SK-N-SH (cell line): ENCODE measurements at regions of chr13 and their contacts with region 1.

Region 1: GRCh38 chr13:35789335-35790165 is 313.1 kb upstream of the MAB21L1 start:
- DNase-seq: no peak
- H3K4me3 ChIP-seq: peak overlapping the region in 1 of 2 experiments; percentile 3; a peak in 1 of 4 replicates
- H3K27ac ChIP-seq: peak overlapping the region; percentile 56 to 97; a peak in 3 of 4 replicates
- H3K4me1 ChIP-seq: peaks cover 0 to 47% of the 10 kb centered on the region in 2 experiments; a peak in 3 of 4 replicates
- H3K27me3 ChIP-seq: no peaks in the 10 kb centered on the region
- CTCF ChIP-seq: peak; percentile 76
- EP300 ChIP-seq: peak; percentile 10 to 65; a peak in 3 of 4 replicates
- RAD21 ChIP-seq: peak; percentile 87

Region 2: DNA sequence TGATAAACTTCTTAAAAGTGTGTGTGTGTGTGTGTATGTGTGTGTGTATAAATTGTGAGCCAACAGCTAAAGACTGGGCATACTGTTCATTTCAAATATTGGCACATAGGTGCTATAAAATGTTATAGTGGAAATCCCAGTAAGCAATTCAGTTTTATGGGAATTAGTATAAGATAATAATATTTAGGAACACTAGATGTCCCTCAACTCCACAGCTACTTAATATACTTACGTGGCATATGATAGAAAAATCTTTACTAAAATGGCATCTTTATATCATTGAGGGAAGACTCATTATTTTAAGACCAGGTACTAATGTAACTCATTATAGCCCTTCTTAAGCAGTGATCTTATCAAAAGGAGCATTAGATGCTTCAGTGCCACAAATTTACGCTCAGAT is 579.3 kb before region 1 on chr13:
- CTCF ChIA-PET with region 1: interaction called, 18 read pairs
- POLR2A ChIA-PET with region 1: no interaction called
- DNase-seq: peak; percentile 3
- H3K4me3 ChIP-seq: no peak overlapping the region
- H3K27ac ChIP-seq: peak overlapping the region in 1 of 2 experiments; percentile 28; a peak in 1 of 4 replicates
- H3K4me1 ChIP-seq: no peaks in the 10 kb centered on the region; a peak in 1 of 4 replicates
- H3K27me3 ChIP-seq: no peaks in the 10 kb centered on the region
- CTCF ChIP-seq: peak; percentile 43
- EP300 ChIP-seq: no peak
- RAD21 ChIP-seq: peak; percentile 77

Region 3: GRCh38 chr13:35475960-35476943 is 313.3 kb before region 1 on chr13 and contains the start of gene MAB21L1:
- CTCF ChIA-PET with region 1: interaction called, 30 read pairs
- POLR2A ChIA-PET with region 1: interaction called, 32 read pairs
- DNase-seq: peak; percentile 90
- H3K4me3 ChIP-seq: peak within 1 kb of the TSS; percentile 64 to 82
- H3K27ac ChIP-seq: peak within 1 kb of the TSS; percentile 93 to 99
- H3K4me1 ChIP-seq: peaks cover 2 to 6% of the 10 kb centered on the region in 2 experiments; a peak in 3 of 4 replicates
- H3K27me3 ChIP-seq: no peaks in the 10 kb centered on the region
- CTCF ChIP-seq: no peak
- EP300 ChIP-seq: peak in 1 of 2 experiments; percentile 23; a peak in 1 of 4 replicates
- RAD21 ChIP-seq: peak; percentile 22; the same call in 1 of the 2 replicates
- polyA plus RNA-seq, gene MAB21L1: 42.3 and 44.8 TPM in 2 replicates

Region 4: GRCh38 chr13:35720690-35721554 is 68.6 kb before region 1 on chr13:
- CTCF ChIA-PET with region 1: interaction called, 52 read pairs
- POLR2A ChIA-PET with region 1: interaction called, 3 read pairs
- DNase-seq: peak; percentile 89
- H3K4me3 ChIP-seq: peak overlapping the region; percentile 26 to 35; a peak in 3 of 4 replicates
- H3K27ac ChIP-seq: peak overlapping the region in 1 of 2 experiments; percentile 50; a peak in 1 of 4 replicates
- H3K4me1 ChIP-seq: peaks cover 0 to 37% of the 10 kb centered on the region in 2 experiments; a peak in 3 of 4 replicates
- H3K27me3 ChIP-seq: no peaks in the 10 kb centered on the region
- CTCF ChIP-seq: peak; percentile 98
- EP300 ChIP-seq: no peak
- RAD21 ChIP-seq: peak; percentile 98

Region 5: DNA sequence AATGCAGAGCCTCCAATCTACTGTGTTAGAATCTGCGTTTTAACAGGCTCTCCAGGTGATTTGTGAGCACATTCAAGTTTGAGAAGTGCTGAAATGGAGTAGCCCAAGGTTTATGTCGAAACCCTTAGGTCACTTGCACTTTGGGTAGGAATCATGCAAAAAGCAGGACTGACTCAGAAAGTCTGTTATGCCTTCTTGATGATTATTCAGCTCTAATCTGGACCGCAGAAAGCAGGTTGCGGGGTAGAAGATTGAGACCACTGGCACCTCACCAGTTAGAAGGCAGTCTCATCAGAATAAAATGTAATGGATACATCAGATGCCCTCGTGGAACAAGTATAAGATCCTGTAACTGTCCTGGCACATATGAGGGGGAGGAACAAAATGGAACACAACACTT is 15.4 kb after region 1 on chr13:
- CTCF ChIA-PET with region 1: interaction called, 40 read pairs
- POLR2A ChIA-PET with region 1: no interaction called
- DNase-seq: no peak
- H3K4me3 ChIP-seq: no peak overlapping the region
- H3K27ac ChIP-seq: no peak overlapping the region
- H3K4me1 ChIP-seq: peaks cover 0 to 16% of the 10 kb centered on the region in 2 experiments; a peak in 2 of 4 replicates
- H3K27me3 ChIP-seq: no peaks in the 10 kb centered on the region
- CTCF ChIP-seq: no peak
- EP300 ChIP-seq: no peak
- RAD21 ChIP-seq: no peak

Region 6: DNA sequence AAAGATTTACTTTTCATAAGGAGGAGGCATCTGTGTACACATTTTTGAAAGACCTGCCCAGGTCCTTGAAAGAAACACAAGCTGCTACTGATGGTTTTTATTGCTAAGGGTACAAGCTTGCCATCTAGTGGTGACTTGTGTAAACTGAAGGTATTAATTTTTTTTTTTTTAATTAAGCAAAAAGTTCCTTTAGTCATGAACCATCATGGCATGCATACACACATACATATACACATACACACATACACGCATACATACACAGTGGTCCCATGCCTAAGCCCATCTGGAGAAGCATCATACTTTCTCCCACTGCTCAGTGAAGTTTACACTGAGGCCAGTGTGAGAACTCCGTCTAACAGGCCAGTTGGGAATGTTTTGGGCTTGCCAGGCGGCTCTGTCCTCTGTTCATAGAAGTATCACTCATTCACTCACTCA is 29.1 kb after region 1 on chr13:
- CTCF ChIA-PET with region 1: interaction called, 35 read pairs
- POLR2A ChIA-PET with region 1: no interaction called
- DNase-seq: peak; percentile 51
- H3K4me3 ChIP-seq: no peak overlapping the region; a peak in 1 of 4 replicates
- H3K27ac ChIP-seq: no peak overlapping the region
- H3K4me1 ChIP-seq: peaks cover 0 to 8% of the 10 kb centered on the region in 2 experiments; a peak in 1 of 4 replicates
- H3K27me3 ChIP-seq: no peaks in the 10 kb centered on the region
- CTCF ChIP-seq: peak; percentile 85
- EP300 ChIP-seq: no peak
- RAD21 ChIP-seq: peak; percentile 85

Region 7: DNA sequence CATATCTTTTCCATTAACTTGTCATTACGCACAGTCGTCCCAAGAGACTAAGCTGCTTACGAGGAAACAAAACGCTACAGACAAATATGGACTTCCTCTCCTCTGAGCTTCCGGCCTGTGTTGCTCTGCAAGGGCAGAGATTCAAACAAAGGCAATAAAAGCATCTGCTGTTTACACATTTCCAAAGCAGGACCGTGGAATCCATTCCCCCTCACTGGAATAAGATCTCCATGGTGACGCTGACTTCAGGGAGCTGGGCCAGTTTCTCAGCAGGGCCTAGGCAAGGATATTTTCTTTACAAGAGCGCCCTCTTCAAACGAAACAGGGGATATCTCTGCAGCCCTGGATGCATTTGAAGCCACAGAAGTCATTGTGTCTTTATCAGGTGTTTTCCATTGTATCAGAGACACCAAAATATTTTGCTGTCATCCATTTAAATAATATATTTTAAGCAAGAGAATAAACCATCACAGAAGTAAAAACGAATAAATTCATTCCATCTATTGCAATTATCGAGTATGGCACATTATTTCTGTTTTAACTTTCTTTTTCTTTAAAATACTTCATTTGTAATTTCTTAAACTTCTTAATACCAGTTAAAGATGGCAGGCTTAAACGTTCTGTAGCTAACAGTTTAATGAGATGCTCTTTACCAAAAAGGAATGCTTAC is 164.1 kb after region 1 on chr13:
- CTCF ChIA-PET with region 1: interaction called, 19 read pairs
- POLR2A ChIA-PET with region 1: interaction called, 3 read pairs
- DNase-seq: peak; percentile 74
- H3K4me3 ChIP-seq: peak overlapping the region; percentile 32 to 42
- H3K27ac ChIP-seq: peak overlapping the region; percentile 43 to 83; a peak in 3 of 4 replicates
- H3K4me1 ChIP-seq: peaks cover 0 to 7% of the 10 kb centered on the region in 2 experiments; a peak in 3 of 4 replicates
- H3K27me3 ChIP-seq: no peaks in the 10 kb centered on the region
- CTCF ChIP-seq: peak; percentile 90
- EP300 ChIP-seq: peak in 1 of 2 experiments; percentile 51; a peak in 2 of 4 replicates
- RAD21 ChIP-seq: peak; percentile 95

Region 8: GRCh38 chr13:36133950-36134626 is 344.5 kb after region 1 on chr13:
- CTCF ChIA-PET with region 1: no interaction called
- POLR2A ChIA-PET with region 1: no interaction called
- DNase-seq: no peak
- H3K4me3 ChIP-seq: no peak overlapping the region
- H3K27ac ChIP-seq: no peak overlapping the region
- H3K4me1 ChIP-seq: peaks cover 11% of the 10 kb centered on the region in 2 experiments; a peak in 2 of 4 replicates
- H3K27me3 ChIP-seq: no peaks in the 10 kb centered on the region
- CTCF ChIP-seq: peak; percentile 28
- EP300 ChIP-seq: no peak
- RAD21 ChIP-seq: peak; percentile 24; the same call in 1 of the 2 replicates